Natural killer cell (primary cell): ENCODE measurements at regions of chr7 and their contacts with region 1.

Region 1: GRCh38 chr7:65839846-65840245 is 33.0 kb upstream of the VKORC1L1 start:
- DNase-seq: no peak
- ATAC-seq: no peak
- H3K4me3 ChIP-seq: no peak overlapping the region
- H3K4me3 Mint-ChIP-seq: no peak overlapping the region
- H3K27ac ChIP-seq: no peak overlapping the region
- H3K27ac Mint-ChIP-seq: peak overlapping the region in 1 of 2 donors; percentile 0
- H3K4me1 ChIP-seq: no peaks in the 10 kb centered on the region
- H3K4me1 Mint-ChIP-seq: no peaks in the 10 kb centered on the region
- H3K27me3 ChIP-seq: no peaks in the 10 kb centered on the region
- H3K27me3 Mint-ChIP-seq: no peaks in the 10 kb centered on the region
- CTCF ChIP-seq: no peak

Region 2: DNA sequence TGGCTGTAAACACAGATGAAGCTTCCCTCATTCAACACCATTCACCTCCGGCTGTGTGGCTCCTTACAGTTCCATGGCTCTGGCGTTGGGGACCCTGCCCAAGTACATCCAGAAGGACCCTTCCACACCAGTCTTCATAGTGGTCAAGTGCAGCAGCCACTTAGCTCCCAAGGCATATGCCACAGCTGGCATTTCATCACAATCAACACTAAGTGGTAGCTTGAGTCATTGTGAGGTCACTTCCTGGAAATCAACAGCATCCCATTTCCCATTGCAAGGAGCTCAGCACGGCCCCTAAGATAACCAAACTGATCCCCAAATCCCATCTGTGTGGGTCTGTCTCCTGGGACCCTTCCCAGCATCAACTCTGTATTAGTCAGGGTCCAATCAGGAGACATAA is 539.9 kb after region 1 on chr7:
- intact Hi-C with region 1: loop called (anchors 5 kb)
- DNase-seq: no peak
- ATAC-seq: no peak
- H3K4me3 ChIP-seq: no peak overlapping the region
- H3K4me3 Mint-ChIP-seq: no peak overlapping the region
- H3K27ac ChIP-seq: no peak overlapping the region
- H3K27ac Mint-ChIP-seq: peak overlapping the region in 1 of 2 donors; percentile 39
- H3K4me1 ChIP-seq: no peaks in the 10 kb centered on the region
- H3K4me1 Mint-ChIP-seq: no peaks in the 10 kb centered on the region
- H3K27me3 ChIP-seq: no peaks in the 10 kb centered on the region
- H3K27me3 Mint-ChIP-seq: no peaks in the 10 kb centered on the region
- CTCF ChIP-seq: no peak